ENCODE measurements at regions of chr2 and their contacts with region 1.

Region 1: GRCh38 chr2:216519154-216519762 is 20.6 kb downstream of the RPL37A start:
- DNase-seq: peak; percentile 41 to 75 (median 51)
- ATAC-seq: peak; percentile 91
- H3K4me3 ChIP-seq: no peak overlapping the region
- H3K27ac ChIP-seq: no peak overlapping the region
- H3K4me1 ChIP-seq: no peaks in the 10 kb centered on the region; a peak in 1 of 5 replicates
- H3K27me3 ChIP-seq: no peaks in the 10 kb centered on the region
- CTCF ChIP-seq: peak; percentile 46 to 60 (median 59); a peak in 5 of 6 replicates
- EP300 ChIP-seq: no peak
- POLR2A ChIP-seq: no peak
- RAD21 ChIP-seq: peak; percentile 77 to 91

Region 2: GRCh38 chr2:216507220-216508160 is 11.8 kb before region 1 on chr2:
- CTCF ChIA-PET with region 1: no interaction called
- POLR2A ChIA-PET with region 1: interaction called, 11 read pairs
- in situ Hi-C with region 1: no loop called
- intact Hi-C with region 1: no loop called
- DNase-seq: no peak
- ATAC-seq: peak; percentile 20; the same call in 2 of the 3 replicates
- H3K4me3 ChIP-seq: no peak overlapping the region
- H3K27ac ChIP-seq: no peak overlapping the region
- H3K4me1 ChIP-seq: no peaks in the 10 kb centered on the region; a peak in 2 of 5 replicates
- H3K27me3 ChIP-seq: no peaks in the 10 kb centered on the region
- CTCF ChIP-seq: no peak
- EP300 ChIP-seq: no peak
- POLR2A ChIP-seq: no peak
- RAD21 ChIP-seq: no peak